CD8-positive, alpha-beta memory T cell (primary cell): ENCODE measurements at regions of chr19 and their contacts with region 1.

Region 1: DNA sequence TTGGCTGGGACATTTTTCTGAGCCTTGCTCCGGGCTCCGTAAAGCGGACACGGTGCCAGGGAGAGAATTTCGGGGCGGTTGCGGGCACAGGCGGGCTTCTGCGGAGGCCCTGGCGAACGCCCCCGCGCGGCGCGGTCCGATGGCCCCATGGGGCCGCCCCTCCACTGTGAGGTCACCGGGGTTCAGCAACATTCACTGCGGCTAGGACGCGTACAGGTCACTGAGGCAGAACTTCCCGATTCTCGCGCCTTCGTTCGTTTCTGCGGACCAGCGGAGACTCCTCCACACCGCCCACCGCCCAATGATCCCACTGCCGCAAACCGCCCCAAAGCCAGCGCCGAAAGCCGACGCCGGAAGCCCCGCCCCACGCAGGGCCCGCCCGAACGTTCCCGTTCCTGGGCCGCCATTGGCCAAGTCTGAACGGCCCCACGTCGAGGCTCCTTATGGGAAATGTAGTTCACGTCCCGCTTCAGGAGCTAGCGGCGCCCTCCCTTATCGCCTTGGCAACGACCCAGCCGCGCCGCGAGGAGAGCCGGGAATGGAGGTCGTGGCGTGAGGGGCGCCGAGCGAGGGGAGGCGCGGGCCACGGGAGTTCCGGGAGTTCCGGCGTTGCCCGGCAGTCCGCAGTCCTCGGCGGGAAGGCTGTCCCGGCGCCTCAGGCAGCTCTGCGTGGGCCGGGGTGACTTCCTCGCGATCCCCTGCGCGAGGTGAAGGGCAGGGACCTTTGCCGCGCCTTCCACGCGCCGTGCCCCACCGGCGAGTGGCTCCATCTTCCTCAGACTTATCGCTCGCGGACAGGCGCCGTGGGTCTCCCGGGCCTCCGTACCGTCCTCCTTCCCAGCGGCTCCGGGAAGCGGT is at the start of gene ZNF584:
- DNase-seq: peak; percentile 90 to 95 (median 91)
- H3K4me3 ChIP-seq: peak within 1 kb of the TSS; percentile 94
- H3K4me3 Mint-ChIP-seq: peak within 1 kb of the TSS; percentile 94 to 97 (median 96)
- H3K27ac ChIP-seq: peak within 1 kb of the TSS; percentile 93
- H3K27ac Mint-ChIP-seq: peak within 1 kb of the TSS; percentile 94 to 98 (median 96)
- H3K4me1 ChIP-seq: peaks cover 18% of the 10 kb centered on the region
- H3K4me1 Mint-ChIP-seq: peaks cover 29 to 38% (median 35%) of the 10 kb centered on the region in 3 donors
- H3K27me3 ChIP-seq: no peaks in the 10 kb centered on the region
- H3K27me3 Mint-ChIP-seq: no peaks in the 10 kb centered on the region
- total RNA-seq, gene ZNF584: 20.9 to 22.6 TPM

Region 2: DNA sequence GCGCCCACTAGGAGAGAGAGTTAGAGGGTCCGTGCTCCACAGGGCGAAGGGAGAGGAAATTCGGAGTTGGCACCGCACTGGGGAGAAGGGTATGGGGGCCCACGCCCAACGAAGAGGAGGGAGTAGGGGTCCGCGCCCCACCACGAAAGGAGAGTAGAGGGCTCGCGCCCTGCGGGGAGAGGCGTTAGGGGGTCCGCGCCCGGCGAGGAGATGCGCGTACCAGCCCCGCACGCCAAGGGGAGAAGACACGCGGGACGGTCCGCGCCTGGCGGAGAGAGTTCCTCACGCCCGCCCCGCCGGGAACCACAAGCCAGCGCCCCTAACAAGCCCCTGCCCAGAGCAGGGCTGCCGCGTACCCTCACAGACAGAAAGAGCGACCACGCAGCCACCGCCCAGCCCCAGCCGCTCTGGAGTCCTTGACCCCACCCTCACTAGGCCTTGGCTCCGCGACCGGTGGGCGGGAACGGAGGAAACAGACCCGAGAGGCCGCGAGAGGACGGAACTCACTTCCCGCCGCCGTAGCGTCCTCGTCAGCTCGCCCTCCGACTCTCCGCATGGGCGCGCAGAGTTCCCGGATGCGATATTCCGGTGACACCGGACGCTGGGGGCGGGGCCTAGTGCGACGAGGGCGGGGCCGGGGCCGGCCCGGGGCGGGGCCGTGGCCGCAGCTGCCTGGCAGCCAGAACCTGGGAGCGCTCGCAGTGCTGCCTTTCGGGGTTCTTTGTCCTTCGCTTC is 290.4 kb before region 1 on chr19:
- CTCF ChIA-PET with region 1: no interaction called
- POLR2A ChIA-PET with region 1: no interaction called
- DNase-seq: no peak
- H3K4me3 ChIP-seq: no peak overlapping the region
- H3K4me3 Mint-ChIP-seq: no peak overlapping the region
- H3K27ac ChIP-seq: no peak overlapping the region
- H3K27ac Mint-ChIP-seq: no peak overlapping the region
- H3K4me1 ChIP-seq: no peaks in the 10 kb centered on the region
- H3K4me1 Mint-ChIP-seq: no peaks in the 10 kb centered on the region
- H3K27me3 ChIP-seq: no peaks in the 10 kb centered on the region
- H3K27me3 Mint-ChIP-seq: peaks cover 12 to 20% of the 10 kb centered on the region in 2 donors

Region 3: GRCh38 chr19:58395220-58396029 is 13.0 kb before region 1 on chr19 and contains the start of gene RNF225:
- CTCF ChIA-PET with region 1: no interaction called
- POLR2A ChIA-PET with region 1: no interaction called
- DNase-seq: no peak
- H3K4me3 ChIP-seq: no peak within 1 kb of the TSS
- H3K4me3 Mint-ChIP-seq: no peak within 1 kb of the TSS
- H3K27ac ChIP-seq: no peak within 1 kb of the TSS
- H3K27ac Mint-ChIP-seq: peak within 1 kb of the TSS in 1 of 8 donors; percentile 23
- H3K4me1 ChIP-seq: peaks cover 3% of the 10 kb centered on the region
- H3K4me1 Mint-ChIP-seq: peaks cover 10 to 32% (median 10%) of the 10 kb centered on the region in 3 donors
- H3K27me3 ChIP-seq: peaks cover 5% of the 10 kb centered on the region
- H3K27me3 Mint-ChIP-seq: peaks cover 10 to 11% of the 10 kb centered on the region in 2 donors
- total RNA-seq, gene RNF225: 0.28 to 0.78 TPM

Region 4: GRCh38 chr19:58429745-58430144 is 21.4 kb after region 1 on chr19:
- CTCF ChIA-PET with region 1: no interaction called
- POLR2A ChIA-PET with region 1: no interaction called
- DNase-seq: no peak
- H3K4me3 ChIP-seq: no peak overlapping the region
- H3K4me3 Mint-ChIP-seq: no peak overlapping the region
- H3K27ac ChIP-seq: no peak overlapping the region
- H3K27ac Mint-ChIP-seq: no peak overlapping the region
- H3K4me1 ChIP-seq: no peaks in the 10 kb centered on the region
- H3K4me1 Mint-ChIP-seq: no peaks in the 10 kb centered on the region
- H3K27me3 ChIP-seq: no peaks in the 10 kb centered on the region
- H3K27me3 Mint-ChIP-seq: peaks cover 0 to 1% of the 10 kb centered on the region in 2 donors

Region 5: DNA sequence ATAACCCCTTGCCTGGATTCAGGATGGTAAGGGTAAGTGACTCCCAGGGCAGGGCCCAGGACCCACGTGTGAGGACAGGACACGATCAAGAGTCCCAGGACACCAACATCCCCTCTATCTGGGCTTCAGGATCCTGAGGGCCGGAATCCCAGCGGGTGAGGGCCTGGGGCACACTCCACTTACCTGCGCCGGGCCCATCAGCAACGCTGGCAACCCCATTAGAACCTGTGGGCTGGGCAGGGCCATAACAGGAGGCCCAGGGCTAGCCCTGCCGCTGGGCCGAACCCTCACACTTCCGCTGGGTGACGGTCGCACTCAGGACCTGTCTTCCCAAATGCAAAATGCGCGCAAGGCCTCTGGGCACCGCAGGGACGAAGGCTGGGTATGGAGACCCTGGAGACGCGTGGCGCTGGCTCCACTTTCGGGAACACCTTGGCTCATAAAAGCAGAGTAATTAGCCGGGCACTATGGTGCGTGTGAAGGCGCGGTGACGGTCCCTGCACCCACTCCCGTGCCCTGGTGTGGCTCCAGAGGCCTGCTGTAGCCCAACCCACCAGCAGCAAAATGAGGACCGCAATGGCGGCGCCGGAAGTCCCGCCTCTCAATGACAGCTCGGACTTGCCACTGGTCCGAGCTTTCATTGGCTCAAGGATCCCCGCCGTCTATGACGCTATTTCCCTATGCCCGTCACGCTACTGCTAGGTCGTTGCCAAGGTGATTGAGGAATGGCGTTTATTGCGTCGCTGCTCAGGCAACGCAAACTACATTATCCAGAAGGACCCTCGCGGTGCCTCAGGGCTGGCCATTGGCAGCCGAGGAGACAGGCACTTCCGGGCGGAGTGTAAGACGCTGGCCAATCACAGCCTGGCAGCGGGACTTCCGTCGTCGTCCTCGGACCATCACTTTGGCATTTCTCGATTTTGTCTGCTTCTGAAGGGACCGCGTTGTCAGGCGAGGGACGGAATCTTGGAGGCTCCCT is 31.5 kb after region 1 on chr19 and contains the start of gene ZNF132:
- CTCF ChIA-PET with region 1: no interaction called
- POLR2A ChIA-PET with region 1: interaction called, 10 read pairs
- DNase-seq: peak; percentile 90 to 98 (median 94)
- H3K4me3 ChIP-seq: peak within 1 kb of the TSS; percentile 93
- H3K4me3 Mint-ChIP-seq: peak within 1 kb of the TSS; percentile 88 to 97 (median 95)
- H3K27ac ChIP-seq: peak within 1 kb of the TSS; percentile 80
- H3K27ac Mint-ChIP-seq: peak within 1 kb of the TSS; percentile 85 to 100 (median 99)
- H3K4me1 ChIP-seq: peaks cover 20% of the 10 kb centered on the region
- H3K4me1 Mint-ChIP-seq: peaks cover 26 to 34% (median 30%) of the 10 kb centered on the region in 3 donors
- H3K27me3 ChIP-seq: no peaks in the 10 kb centered on the region
- H3K27me3 Mint-ChIP-seq: peaks cover 4% of the 10 kb centered on the region in 2 donors
- total RNA-seq, gene ZNF132: 4.9 to 5.2 TPM

Region 6: DNA sequence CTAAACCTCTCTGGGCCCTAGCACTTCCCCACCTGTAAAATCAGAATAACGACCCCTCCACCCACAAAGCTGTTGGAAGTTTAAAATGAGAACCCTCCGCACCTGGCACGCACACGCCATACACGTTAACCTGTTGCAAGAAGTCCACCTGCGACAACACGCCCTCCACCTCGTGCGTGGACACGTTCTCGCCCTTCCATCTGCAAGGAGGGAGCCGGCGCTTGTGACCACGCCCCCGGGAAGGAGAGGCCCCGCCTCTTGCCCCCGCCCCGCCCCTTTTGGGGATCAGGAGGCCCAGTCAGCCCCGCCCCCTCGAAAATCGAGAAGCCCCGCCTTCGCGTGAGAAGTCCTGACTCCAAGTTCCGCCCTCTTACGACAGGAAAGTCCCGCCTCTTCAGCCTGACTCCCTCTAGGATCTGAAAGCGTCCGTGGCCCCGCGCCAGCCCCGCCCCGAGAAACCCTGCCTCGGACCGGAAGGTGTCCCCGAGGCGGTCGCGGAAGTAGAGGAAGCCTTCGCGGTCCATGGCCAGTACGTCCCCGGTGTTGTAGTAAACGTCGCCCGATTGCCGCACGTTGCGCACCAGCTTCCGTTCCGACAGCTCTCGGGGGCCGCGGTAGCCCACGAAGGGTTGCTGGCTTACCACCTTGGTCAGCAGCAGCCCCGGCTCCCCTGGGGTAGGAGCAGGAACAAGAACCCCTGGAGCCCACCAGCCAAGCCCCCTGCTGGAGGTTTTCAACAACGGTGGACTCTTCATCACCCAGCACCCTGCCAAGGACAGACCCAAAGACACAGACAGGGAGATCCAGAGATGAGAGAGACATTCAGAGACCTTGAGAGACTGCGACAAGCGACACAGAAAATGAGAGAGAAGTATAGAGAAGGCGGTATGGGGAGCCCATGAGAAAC is 90.9 kb after region 1 on chr19:
- CTCF ChIA-PET with region 1: no interaction called
- POLR2A ChIA-PET with region 1: no interaction called
- DNase-seq: peak; percentile 87 to 96 (median 91)
- H3K4me3 ChIP-seq: peak overlapping the region; percentile 83
- H3K4me3 Mint-ChIP-seq: peak overlapping the region; percentile 86 to 96 (median 90)
- H3K27ac ChIP-seq: peak overlapping the region; percentile 60
- H3K27ac Mint-ChIP-seq: peak overlapping the region; percentile 91 to 98 (median 97)
- H3K4me1 ChIP-seq: peaks cover 18% of the 10 kb centered on the region
- H3K4me1 Mint-ChIP-seq: peaks cover 25 to 32% (median 26%) of the 10 kb centered on the region in 3 donors
- H3K27me3 ChIP-seq: no peaks in the 10 kb centered on the region
- H3K27me3 Mint-ChIP-seq: peaks cover 0 to 4% of the 10 kb centered on the region in 2 donors